ENCODE measurements at regions of chr15 and their contacts with region 1.

Region 1: DNA sequence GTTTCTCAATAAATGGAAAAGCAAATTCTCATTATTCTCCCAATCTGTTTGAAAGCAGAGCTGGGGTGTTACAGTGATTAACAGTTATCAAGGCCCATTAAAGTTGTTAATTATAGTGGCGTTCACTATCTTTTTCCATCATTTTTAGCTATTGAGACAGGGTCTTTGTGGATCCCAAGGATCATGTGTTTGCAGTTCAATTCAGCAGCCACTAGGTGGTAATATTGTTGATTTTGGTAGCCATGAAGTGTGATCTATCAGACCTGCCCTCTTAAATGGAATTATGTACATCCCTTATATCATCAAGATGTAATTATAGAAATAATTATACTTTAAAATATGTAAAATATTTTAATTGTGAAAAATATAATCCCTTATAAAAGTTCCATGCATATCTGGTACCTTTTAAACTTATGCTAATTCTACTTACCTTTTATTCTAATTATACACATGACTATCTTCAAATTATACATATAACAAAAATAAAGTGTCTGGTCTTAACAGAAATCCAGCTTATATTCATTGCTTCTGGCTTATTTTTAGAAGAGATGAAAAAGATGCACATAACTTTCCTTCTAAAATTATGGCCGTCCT is 126.4 kb downstream of the GREM1 start:
- DNase-seq: peak; percentile 59
- H3K4me3 ChIP-seq: no peak overlapping the region
- H3K27ac ChIP-seq: no peak overlapping the region
- H3K4me1 ChIP-seq: peaks cover 6% of the 10 kb centered on the region
- H3K27me3 ChIP-seq: peaks cover 13% of the 10 kb centered on the region
- CTCF ChIP-seq: peak; percentile 77

Region 2: DNA sequence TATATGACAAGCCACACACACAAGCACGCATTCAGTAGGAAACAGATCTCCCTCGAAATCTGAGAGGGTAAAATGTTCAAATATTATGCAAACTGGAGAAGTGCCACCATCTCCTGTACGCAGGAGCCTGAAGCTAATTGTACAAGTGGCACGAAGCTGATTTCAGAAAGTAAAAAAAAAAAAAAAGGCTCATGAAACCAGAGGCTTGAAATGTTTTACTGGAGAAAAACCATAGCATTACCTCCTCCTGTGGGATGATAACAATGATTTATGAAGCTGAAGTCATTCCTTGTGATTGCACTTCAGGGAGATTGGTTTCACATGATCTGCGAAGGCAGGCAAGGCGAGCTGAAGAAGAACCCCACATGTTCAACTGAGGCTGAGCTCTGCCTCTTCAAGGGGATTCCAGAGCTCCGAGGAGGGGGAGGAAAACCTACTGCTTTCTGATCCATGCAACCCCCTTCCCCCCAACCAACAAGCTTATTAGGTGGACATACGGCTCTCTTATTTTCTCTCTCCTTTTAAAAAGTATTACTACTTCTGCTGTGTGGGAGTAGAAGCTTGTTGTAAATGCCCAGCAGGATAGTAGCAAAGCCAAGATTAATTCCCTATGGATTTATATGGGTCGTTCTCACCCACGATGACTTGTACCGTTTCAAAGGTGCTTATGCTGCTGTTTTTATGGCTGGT is 25.3 kb before region 1 on chr15:
- CTCF ChIA-PET with region 1: no interaction called
- POLR2A ChIA-PET with region 1: interaction called, 18 read pairs
- intact Hi-C with region 1: no loop called
- DNase-seq: peak; percentile 69
- H3K4me3 ChIP-seq: no peak overlapping the region
- H3K27ac ChIP-seq: no peak overlapping the region
- H3K4me1 ChIP-seq: peaks cover 12% of the 10 kb centered on the region
- H3K27me3 ChIP-seq: peaks cover under 1% of the 10 kb centered on the region
- CTCF ChIP-seq: no peak

Region 3: DNA sequence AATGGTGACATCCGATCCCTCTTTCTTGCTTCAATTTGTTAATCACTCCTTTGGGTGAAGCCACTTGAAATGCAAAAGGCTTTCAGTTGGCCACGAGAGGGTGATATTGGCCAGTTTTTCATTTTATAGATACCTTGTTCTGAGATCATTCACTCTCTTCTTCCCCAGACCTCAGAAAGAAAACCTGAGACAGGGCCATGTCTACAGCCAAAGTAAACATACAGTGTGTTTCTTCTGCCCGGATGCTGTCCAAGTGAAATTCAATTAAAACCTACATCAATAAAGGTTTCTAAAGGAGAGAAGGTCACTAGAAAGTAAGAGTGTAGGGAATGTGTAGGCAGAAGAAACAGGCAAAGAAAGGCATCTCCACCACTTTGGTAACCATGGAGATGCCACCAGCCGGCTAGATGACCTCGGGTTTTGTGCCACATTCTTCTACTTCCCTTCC is 389.8 kb after region 1 on chr15:
- CTCF ChIA-PET with region 1: no interaction called
- POLR2A ChIA-PET with region 1: no interaction called
- intact Hi-C with region 1: no loop called
- DNase-seq: peak; percentile 34
- H3K4me3 ChIP-seq: no peak overlapping the region
- H3K27ac ChIP-seq: no peak overlapping the region
- H3K4me1 ChIP-seq: no peaks in the 10 kb centered on the region
- H3K27me3 ChIP-seq: peaks cover 30% of the 10 kb centered on the region
- CTCF ChIP-seq: peak; percentile 58